Activated naive CD4-positive, alpha-beta T cell treated with anti-CD3 and anti-CD28 coated beads for 36 hours (primary cell): ENCODE measurements at regions of chr9 and their contacts with region 1.

Region 1: DNA sequence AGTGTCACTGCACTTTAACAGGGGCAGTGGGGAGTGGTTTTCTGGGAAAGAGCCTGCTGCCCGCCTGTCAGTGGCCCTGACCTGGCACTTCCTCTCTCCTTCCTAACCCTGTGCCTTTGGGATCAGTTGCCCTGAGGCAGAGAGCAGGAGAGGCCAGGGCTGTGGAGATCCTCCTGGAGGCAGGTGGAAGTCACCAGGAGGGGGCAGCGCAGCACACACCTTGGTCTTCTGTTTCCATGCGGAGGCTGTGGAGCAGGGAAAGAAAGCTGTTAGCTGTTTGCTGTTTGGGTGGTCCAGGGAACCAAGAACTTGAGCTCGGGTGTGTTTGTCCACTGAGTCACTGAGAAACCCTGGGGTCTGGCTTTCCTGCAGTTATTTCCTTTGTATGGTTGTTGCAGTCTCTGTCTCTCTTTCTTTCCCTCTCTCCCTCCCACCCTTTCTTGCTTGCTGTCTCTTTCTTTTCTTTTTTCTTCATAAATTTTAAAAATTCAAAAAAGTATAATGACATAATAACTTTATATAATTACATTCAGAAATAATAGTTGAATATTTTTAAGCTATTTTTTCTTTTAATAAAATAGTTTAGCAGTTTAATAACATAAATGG is 28.1 kb downstream of the NTRK2 start:
- DNase-seq: peak; percentile 61
- H3K4me3 Mint-ChIP-seq: no peak overlapping the region
- H3K27ac Mint-ChIP-seq: no peak overlapping the region
- H3K4me1 Mint-ChIP-seq: no peaks in the 10 kb centered on the region
- H3K27me3 Mint-ChIP-seq: peaks cover 10% of the 10 kb centered on the region

Region 2: DNA sequence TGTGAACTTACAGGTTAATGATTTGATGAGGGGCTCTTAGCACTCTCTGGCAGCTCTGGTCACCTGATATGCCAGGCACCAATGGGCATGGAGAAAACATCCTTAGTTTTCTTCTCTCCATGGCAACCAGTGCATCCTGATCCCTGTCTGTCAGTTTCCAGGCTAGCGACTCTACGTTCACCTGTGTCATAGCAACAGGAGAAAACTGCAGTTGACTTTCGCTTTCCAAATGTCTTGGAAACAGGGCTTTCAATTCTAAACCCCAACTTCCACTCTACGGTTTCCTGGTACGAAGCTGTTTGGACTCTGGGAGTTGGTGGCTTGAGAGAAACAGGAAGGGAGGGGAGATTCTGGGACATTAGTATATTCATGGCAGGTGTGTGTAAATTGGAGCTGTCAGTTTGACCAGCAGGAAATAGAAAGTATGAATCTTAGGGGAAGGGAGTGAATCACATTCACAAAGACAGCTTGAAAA is 431.5 kb before region 1 on chr9:
- CTCF ChIA-PET with region 1: no interaction called
- intact Hi-C with region 1: no loop called
- DNase-seq: peak; percentile 47
- H3K4me3 Mint-ChIP-seq: peak overlapping the region; percentile 29
- H3K27ac Mint-ChIP-seq: peak overlapping the region; percentile 53
- H3K4me1 Mint-ChIP-seq: peaks cover 10% of the 10 kb centered on the region
- H3K27me3 Mint-ChIP-seq: peaks cover 4% of the 10 kb centered on the region

Region 3: DNA sequence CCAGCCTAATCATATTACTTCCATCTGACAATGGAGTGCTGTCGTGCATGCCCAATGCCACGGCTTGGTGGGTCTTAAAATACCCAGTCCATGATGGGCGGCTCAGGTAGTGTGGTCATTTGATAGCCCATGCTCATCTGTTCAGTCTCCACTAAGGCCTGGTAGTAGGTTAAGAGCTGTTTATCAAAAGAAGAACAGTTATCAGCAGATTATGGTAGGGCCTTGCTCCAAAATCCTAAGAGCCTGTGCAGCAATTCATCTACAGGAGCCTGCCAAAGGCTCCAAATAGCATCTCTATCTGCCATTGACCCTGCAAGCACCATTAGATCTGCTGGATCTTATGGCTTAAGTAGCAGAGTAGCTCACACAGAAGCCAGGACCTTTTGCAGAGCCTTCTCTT is 49.9 kb before region 1 on chr9:
- CTCF ChIA-PET with region 1: no interaction called
- intact Hi-C with region 1: no loop called
- DNase-seq: no peak
- H3K4me3 Mint-ChIP-seq: no peak overlapping the region
- H3K27ac Mint-ChIP-seq: no peak overlapping the region
- H3K4me1 Mint-ChIP-seq: no peaks in the 10 kb centered on the region
- H3K27me3 Mint-ChIP-seq: peaks cover 3% of the 10 kb centered on the region

Region 4: DNA sequence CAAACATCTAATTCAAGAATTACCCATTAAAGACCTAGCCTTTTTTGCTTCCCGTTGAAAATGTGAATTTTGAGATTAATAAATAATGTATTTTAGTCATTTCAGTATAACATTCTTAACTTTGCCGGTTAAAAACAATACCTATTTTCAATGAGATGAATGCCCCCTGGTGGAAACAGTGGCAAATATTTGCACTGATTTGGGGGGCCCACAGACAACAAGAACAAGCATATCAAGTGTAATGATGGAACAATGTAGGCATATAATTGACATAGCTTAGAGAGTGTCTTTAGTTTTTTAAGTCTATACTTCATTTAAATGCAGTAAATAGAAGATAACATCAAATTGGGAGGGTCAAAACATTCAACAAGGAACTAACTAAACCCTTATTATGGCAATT is 83.8 kb after region 1 on chr9:
- CTCF ChIA-PET with region 1: interaction called, 3 read pairs
- intact Hi-C with region 1: loop called (anchors 5 kb)
- DNase-seq: peak; percentile 7
- H3K4me3 Mint-ChIP-seq: no peak overlapping the region
- H3K27ac Mint-ChIP-seq: no peak overlapping the region
- H3K4me1 Mint-ChIP-seq: no peaks in the 10 kb centered on the region
- H3K27me3 Mint-ChIP-seq: peaks cover 4% of the 10 kb centered on the region

Region 5: GRCh38 chr9:84897362-84898094 is 199.9 kb after region 1 on chr9:
- CTCF ChIA-PET with region 1: no interaction called
- intact Hi-C with region 1: no loop called
- DNase-seq: no peak
- H3K4me3 Mint-ChIP-seq: no peak overlapping the region
- H3K27ac Mint-ChIP-seq: no peak overlapping the region
- H3K4me1 Mint-ChIP-seq: no peaks in the 10 kb centered on the region
- H3K27me3 Mint-ChIP-seq: no peaks in the 10 kb centered on the region

Region 6: GRCh38 chr9:84953797-84954705 is 256.4 kb after region 1 on chr9:
- CTCF ChIA-PET with region 1: no interaction called
- intact Hi-C with region 1: loop called (anchors 2 kb)
- DNase-seq: peak; percentile 71
- H3K4me3 Mint-ChIP-seq: no peak overlapping the region
- H3K27ac Mint-ChIP-seq: no peak overlapping the region
- H3K4me1 Mint-ChIP-seq: no peaks in the 10 kb centered on the region
- H3K27me3 Mint-ChIP-seq: peaks cover 19% of the 10 kb centered on the region

Region 7: GRCh38 chr9:85425153-85425611 is 727.6 kb after region 1 on chr9:
- CTCF ChIA-PET with region 1: no interaction called
- intact Hi-C with region 1: loop called (anchors 10 kb)
- DNase-seq: peak; percentile 69
- H3K4me3 Mint-ChIP-seq: no peak overlapping the region
- H3K27ac Mint-ChIP-seq: no peak overlapping the region
- H3K4me1 Mint-ChIP-seq: no peaks in the 10 kb centered on the region
- H3K27me3 Mint-ChIP-seq: peaks cover 19% of the 10 kb centered on the region